ENCODE measurements at regions of chr16 and their contacts with region 1.

Region 1: GRCh38 chr16:15857724-15858560 is 1.1 kb upstream of the MYH11 start:
- DNase-seq: no peak
- H3K4me3 ChIP-seq: peak overlapping the region; percentile 56
- H3K27ac ChIP-seq: no peak overlapping the region
- H3K27me3 ChIP-seq: peaks cover 39% of the 10 kb centered on the region
- CTCF ChIP-seq: no peak

Region 2: GRCh38 chr16:15777533-15778203 is 80.3 kb before region 1 on chr16:
- CTCF ChIA-PET with region 1: interaction called, 10 read pairs
- POLR2A ChIA-PET with region 1: no interaction called
- DNase-seq: peak; percentile 43
- H3K4me3 ChIP-seq: no peak overlapping the region
- H3K27ac ChIP-seq: no peak overlapping the region
- H3K27me3 ChIP-seq: peaks cover 14% of the 10 kb centered on the region
- CTCF ChIP-seq: peak; percentile 73

Region 3: GRCh38 chr16:15874745-15875314 is 16.9 kb after region 1 on chr16:
- CTCF ChIA-PET with region 1: interaction called, 27 read pairs
- POLR2A ChIA-PET with region 1: no interaction called
- DNase-seq: peak; percentile 52
- H3K4me3 ChIP-seq: no peak overlapping the region
- H3K27ac ChIP-seq: no peak overlapping the region
- H3K27me3 ChIP-seq: no peaks in the 10 kb centered on the region
- CTCF ChIP-seq: peak; percentile 87

Region 4: DNA sequence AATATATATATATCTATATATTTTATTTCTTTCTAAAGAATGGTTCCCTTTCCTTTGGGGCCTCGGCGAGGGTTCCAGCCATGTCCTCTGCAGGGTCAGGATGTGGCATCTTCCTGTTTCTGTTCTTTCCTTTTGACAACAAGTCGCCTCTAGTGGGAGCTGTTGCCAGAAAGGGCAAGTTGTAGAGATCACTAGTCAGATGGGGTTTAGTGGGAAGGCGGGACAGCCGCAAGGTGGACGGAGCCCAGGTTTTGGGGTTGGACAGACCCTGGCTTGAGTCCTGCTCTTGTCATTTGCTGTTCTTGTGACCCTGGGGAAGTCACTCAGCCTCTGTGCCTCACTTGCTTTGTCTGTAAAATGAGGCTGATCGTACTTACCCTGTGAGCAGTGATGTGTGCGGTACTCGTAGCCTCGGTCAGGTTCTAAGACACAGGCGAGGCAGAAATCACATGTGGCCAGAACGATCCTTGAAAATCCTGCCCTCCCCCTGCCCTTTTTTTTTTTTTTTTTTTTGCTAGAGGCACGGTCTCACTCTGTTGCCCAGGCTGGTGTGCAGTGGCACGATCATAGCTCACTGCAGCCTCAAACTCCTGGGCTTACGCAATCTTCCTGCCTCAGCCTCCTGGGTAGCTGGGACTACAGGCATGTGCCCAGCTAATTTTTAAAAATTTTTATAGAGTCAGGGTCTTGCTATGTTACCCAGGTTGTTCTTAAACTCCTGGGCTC is 285.3 kb after region 1 on chr16:
- CTCF ChIA-PET with region 1: no interaction called
- POLR2A ChIA-PET with region 1: interaction called, 10 read pairs
- DNase-seq: no peak
- H3K4me3 ChIP-seq: no peak overlapping the region
- H3K27ac ChIP-seq: no peak overlapping the region
- H3K27me3 ChIP-seq: no peaks in the 10 kb centered on the region
- CTCF ChIP-seq: peak; percentile 32

Measured in AG04450 (cell line).